ENCODE measurements at regions of chr12 and their contacts with region 1.

Region 1: GRCh38 chr12:94074980-94075928 is 73.1 kb upstream of the PLXNC1 start:
- DNase-seq: peak in 1 of 2 donors; percentile 90
- H3K4me3 ChIP-seq: peak overlapping the region in 1 of 2 donors; percentile 39
- H3K27ac ChIP-seq: peak overlapping the region; percentile 89 to 94
- H3K4me1 ChIP-seq: peaks cover 0 to 21% of the 10 kb centered on the region in 2 donors
- H3K27me3 ChIP-seq: no peaks in the 10 kb centered on the region
- CTCF ChIP-seq: peak; percentile 62 to 76 (median 67)

Region 2: GRCh38 chr12:93569656-93570551 is 505.4 kb before region 1 on chr12:
- intact Hi-C with region 1: loop called (anchors 1 kb)
- DNase-seq: peak; percentile 35 to 91
- H3K4me3 ChIP-seq: peak overlapping the region; percentile 88 to 90
- H3K27ac ChIP-seq: peak overlapping the region; percentile 92 to 93
- H3K4me1 ChIP-seq: no peaks in the 10 kb centered on the region
- H3K27me3 ChIP-seq: no peaks in the 10 kb centered on the region
- CTCF ChIP-seq: peak; percentile 77 to 90 (median 79)

Region 3: DNA sequence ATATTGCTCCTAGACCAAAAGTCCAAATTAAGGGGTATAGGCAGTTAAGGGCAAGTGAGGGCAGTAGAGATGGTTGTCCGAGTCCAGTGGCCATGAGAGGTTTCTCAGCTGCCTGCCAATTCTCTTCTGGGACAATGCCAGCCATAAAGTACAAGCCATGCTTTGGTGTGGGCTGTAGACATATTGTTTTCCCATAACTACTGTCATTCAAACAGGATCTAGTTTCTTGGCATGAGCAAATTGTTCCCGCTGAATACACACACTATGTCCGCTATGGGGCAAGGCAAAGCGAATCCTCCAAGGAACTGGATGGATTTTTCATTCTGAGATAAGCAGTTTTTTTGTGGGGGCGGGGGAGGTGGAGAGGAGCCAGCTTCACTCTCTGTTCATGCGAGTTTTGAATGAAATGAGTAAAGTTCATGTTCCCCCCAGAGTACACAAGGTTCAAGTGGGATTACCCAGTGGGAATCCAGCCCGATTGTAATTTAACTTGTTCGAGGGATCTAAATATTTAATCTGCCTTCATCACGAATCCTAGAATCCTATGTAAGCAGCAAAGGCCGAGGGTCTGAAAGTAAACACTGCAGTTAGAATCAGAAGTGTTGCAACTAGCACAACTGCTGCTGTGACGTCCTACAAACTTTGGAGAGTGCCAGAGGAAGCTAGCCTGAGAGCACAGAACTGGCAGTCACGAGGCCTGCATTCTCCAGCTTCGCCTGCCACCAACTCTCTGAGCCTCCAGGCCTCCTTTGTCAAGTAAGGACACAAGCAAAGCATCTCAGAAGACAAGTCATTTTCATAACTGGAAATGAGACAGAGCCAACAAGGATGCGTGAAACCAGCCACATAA is 261.1 kb before region 1 on chr12:
- intact Hi-C with region 1: loop called (anchors 1 kb)
- DNase-seq: peak; percentile 21 to 92
- H3K4me3 ChIP-seq: peak overlapping the region; percentile 24 to 43
- H3K27ac ChIP-seq: peak overlapping the region; percentile 85 to 98
- H3K4me1 ChIP-seq: peaks cover 4 to 39% of the 10 kb centered on the region in 2 donors
- H3K27me3 ChIP-seq: no peaks in the 10 kb centered on the region
- CTCF ChIP-seq: no peak

Region 4: GRCh38 chr12:93918262-93918661 is 157.0 kb before region 1 on chr12:
- intact Hi-C with region 1: loop called (anchors 1 kb)
- DNase-seq: peak in 1 of 2 donors; percentile 74
- H3K4me3 ChIP-seq: no peak overlapping the region
- H3K27ac ChIP-seq: peak overlapping the region; percentile 91 to 94
- H3K4me1 ChIP-seq: peaks cover 4 to 26% of the 10 kb centered on the region in 2 donors
- H3K27me3 ChIP-seq: no peaks in the 10 kb centered on the region
- CTCF ChIP-seq: no peak

Region 5: GRCh38 chr12:94032368-94032767 is 42.9 kb before region 1 on chr12:
- intact Hi-C with region 1: loop called (anchors 1 kb)
- DNase-seq: peak in 1 of 2 donors; percentile 68
- H3K4me3 ChIP-seq: no peak overlapping the region
- H3K27ac ChIP-seq: peak overlapping the region in 1 of 2 donors; percentile 22
- H3K4me1 ChIP-seq: no peaks in the 10 kb centered on the region
- H3K27me3 ChIP-seq: no peaks in the 10 kb centered on the region
- CTCF ChIP-seq: no peak

Region 6: DNA sequence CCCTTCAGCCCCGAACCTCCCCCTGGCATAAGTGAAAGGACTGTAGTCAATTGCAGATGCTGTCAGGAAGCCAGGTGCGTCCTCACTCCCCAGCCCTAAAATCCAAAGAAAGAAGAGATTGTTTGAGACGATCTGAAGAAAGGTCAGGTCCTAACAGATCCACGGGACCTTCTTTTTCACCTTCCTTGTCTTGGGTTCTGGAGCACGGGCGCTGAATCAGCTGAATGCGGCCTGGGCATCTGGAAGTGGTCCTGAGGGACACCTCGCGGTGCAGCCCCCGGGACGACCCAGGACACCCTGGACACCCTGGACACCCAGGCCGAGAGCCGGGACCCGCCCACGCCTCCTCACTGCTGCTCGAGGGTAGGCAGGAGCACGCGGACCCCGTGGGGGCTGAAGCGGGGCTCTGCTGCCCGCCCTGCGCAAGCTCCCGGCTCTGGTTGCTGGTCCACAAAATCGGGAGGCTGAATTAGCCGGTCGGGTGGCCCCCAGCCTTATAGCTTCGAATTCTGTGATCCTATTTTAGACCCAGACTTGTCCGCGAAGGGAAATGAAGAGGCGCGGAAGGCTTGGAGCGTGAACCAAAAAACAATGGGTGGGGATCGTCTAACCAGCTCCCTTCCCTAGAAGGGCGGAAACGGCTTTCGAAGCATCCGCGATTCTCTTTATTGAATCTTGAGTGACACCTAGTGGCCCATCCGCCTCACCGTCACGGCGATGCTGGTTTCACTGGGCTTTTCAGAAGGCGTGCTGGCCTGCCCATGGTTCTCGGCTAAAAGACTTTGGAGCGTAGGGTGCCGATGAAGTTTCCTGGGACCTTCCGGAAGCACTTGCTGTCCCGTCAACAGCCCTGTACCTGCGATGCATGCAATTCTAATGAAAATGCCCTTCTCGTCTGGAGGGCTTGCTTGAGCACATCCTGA is 26.7 kb after region 1 on chr12:
- intact Hi-C with region 1: loop called (anchors 2 kb)
- DNase-seq: peak; percentile 39 to 94
- H3K4me3 ChIP-seq: peak overlapping the region; percentile 63 to 67
- H3K27ac ChIP-seq: peak overlapping the region; percentile 1 to 47
- H3K4me1 ChIP-seq: peaks cover 0 to 4% of the 10 kb centered on the region in 2 donors
- H3K27me3 ChIP-seq: no peaks in the 10 kb centered on the region
- CTCF ChIP-seq: peak; percentile 71 to 87 (median 71)

Region 7: GRCh38 chr12:94172973-94173372 is 97.7 kb after region 1 on chr12:
- intact Hi-C with region 1: no loop called
- DNase-seq: peak in 1 of 2 donors; percentile 70
- H3K4me3 ChIP-seq: no peak overlapping the region
- H3K27ac ChIP-seq: no peak overlapping the region
- H3K4me1 ChIP-seq: no peaks in the 10 kb centered on the region
- H3K27me3 ChIP-seq: no peaks in the 10 kb centered on the region
- CTCF ChIP-seq: no peak

Measured in ascending aorta (tissue), 2 donors.